A673 (cell line): ENCODE measurements at regions of chr5 and their contacts with region 1.

Region 1: GRCh38 chr5:84017523-84018230 is 297.0 kb upstream of the HAPLN1 start:
- DNase-seq: no peak
- H3K4me3 ChIP-seq: no peak overlapping the region
- H3K27ac ChIP-seq: no peak overlapping the region
- H3K4me1 ChIP-seq: no peaks in the 10 kb centered on the region
- H3K27me3 ChIP-seq: no peaks in the 10 kb centered on the region
- CTCF ChIP-seq: no peak

Region 2: GRCh38 chr5:84115727-84116126 is 98.0 kb after region 1 on chr5:
- CTCF ChIA-PET with region 1: no interaction called
- POLR2A ChIA-PET with region 1: interaction called, 11 read pairs
- intact Hi-C with region 1: no loop called
- DNase-seq: no peak
- H3K4me3 ChIP-seq: no peak overlapping the region
- H3K27ac ChIP-seq: no peak overlapping the region
- H3K4me1 ChIP-seq: no peaks in the 10 kb centered on the region
- H3K27me3 ChIP-seq: no peaks in the 10 kb centered on the region
- CTCF ChIP-seq: no peak

Region 3: GRCh38 chr5:84816746-84817547 is 799.3 kb after region 1 on chr5:
- CTCF ChIA-PET with region 1: no interaction called
- POLR2A ChIA-PET with region 1: no interaction called
- intact Hi-C with region 1: no loop called
- DNase-seq: no peak
- H3K4me3 ChIP-seq: no peak overlapping the region
- H3K27ac ChIP-seq: no peak overlapping the region
- H3K4me1 ChIP-seq: no peaks in the 10 kb centered on the region
- H3K27me3 ChIP-seq: no peaks in the 10 kb centered on the region
- CTCF ChIP-seq: no peak